Caco-2 (cell line): ENCODE measurements at regions of chr6 and their contacts with region 1.

Region 1: DNA sequence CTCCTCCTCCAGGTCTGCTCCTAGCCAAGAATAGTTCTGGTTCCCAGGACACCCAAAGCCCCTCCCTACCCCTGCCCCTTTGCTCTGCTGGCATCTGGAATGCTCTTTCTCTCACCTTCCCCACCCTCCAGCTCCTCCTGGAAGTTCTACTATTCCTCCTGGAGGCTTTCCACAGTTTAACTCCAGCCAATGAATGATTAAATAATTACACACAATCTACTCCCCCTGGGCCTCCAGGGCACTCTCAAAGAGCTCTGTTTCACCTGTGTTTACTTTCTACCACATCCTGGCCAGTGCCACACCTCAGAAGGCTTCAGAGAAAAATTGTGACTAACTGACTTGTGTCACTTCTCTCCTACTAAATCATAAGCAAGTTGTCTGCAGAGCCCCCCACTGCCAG is 36.2 kb downstream of the GCM1 start:
- DNase-seq: peak; percentile 28 to 61
- H3K4me3 ChIP-seq: no peak overlapping the region
- H3K4me3 Mint-ChIP-seq: no peak overlapping the region
- H3K27ac Mint-ChIP-seq: peak overlapping the region; percentile 79
- H3K4me1 ChIP-seq: peaks cover 38% of the 10 kb centered on the region
- H3K4me1 Mint-ChIP-seq: peaks cover 32% of the 10 kb centered on the region
- H3K27me3 ChIP-seq: no peaks in the 10 kb centered on the region
- H3K27me3 Mint-ChIP-seq: no peaks in the 10 kb centered on the region
- CTCF ChIP-seq: no peak

Region 2: DNA sequence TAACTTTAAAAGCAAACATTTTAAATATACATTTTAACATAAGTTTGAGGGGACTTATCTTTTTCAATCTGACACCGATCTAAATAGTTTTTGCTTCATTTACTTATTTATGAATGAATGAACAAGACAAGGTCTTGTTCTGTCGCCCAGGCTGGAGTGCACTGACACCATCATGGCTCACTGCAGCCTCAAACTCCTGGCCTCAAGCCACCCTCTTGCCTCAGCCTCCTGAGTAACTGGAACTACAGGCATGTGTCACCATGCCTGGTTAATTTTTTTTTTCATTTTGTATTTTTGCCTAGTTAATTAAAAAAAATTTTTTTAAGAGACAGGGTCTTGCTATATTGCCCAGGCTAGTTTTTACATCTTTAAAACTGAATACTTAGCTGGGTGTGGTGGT is 21.8 kb before region 1 on chr6:
- CTCF ChIA-PET with region 1: no interaction called
- POLR2A ChIA-PET with region 1: interaction called, 15 read pairs
- intact Hi-C with region 1: no loop called
- DNase-seq: no peak
- H3K4me3 ChIP-seq: no peak overlapping the region
- H3K4me3 Mint-ChIP-seq: no peak overlapping the region
- H3K27ac Mint-ChIP-seq: no peak overlapping the region
- H3K4me1 ChIP-seq: no peaks in the 10 kb centered on the region
- H3K4me1 Mint-ChIP-seq: no peaks in the 10 kb centered on the region
- H3K27me3 ChIP-seq: no peaks in the 10 kb centered on the region
- H3K27me3 Mint-ChIP-seq: no peaks in the 10 kb centered on the region
- CTCF ChIP-seq: no peak

Region 3: DNA sequence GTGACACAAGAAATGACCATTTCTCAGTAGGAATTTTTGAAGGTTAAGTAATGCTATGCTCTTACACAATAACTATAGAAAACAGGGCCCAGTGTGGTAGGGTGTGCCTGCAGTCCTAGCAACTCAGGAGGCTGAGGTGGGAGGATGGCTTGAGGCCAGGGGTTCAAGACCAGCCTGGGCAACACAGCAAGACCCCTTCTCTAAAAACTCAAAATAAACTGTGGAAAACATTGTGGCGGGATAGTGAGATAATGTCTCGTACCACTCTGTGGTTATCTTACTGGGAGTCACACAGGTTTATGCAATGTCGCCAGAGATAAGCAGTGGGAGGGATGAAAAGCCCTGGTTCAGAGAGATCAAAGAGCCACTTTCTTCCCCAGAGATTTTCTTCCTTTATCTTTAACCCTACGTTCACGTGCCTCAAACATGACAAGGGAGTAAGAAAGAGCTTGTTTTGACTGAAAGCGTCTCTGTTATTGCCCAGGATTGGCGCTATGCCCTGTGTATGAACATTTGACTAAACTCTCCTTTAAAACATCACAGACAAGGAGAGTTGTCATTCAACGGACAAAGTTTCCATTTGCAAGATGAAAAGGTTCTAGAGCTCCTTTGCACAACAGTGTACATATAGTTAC is 22.3 kb after region 1 on chr6:
- CTCF ChIA-PET with region 1: interaction called, 3 read pairs
- POLR2A ChIA-PET with region 1: interaction called, 6 read pairs
- intact Hi-C with region 1: loop called (anchors 2 kb)
- DNase-seq: peak; percentile 73 to 75
- H3K4me3 ChIP-seq: no peak overlapping the region
- H3K4me3 Mint-ChIP-seq: peak overlapping the region; percentile 47
- H3K27ac Mint-ChIP-seq: peak overlapping the region; percentile 55
- H3K4me1 ChIP-seq: peaks cover 28% of the 10 kb centered on the region
- H3K4me1 Mint-ChIP-seq: peaks cover 24% of the 10 kb centered on the region
- H3K27me3 ChIP-seq: no peaks in the 10 kb centered on the region
- H3K27me3 Mint-ChIP-seq: no peaks in the 10 kb centered on the region
- CTCF ChIP-seq: no peak

Region 4: DNA sequence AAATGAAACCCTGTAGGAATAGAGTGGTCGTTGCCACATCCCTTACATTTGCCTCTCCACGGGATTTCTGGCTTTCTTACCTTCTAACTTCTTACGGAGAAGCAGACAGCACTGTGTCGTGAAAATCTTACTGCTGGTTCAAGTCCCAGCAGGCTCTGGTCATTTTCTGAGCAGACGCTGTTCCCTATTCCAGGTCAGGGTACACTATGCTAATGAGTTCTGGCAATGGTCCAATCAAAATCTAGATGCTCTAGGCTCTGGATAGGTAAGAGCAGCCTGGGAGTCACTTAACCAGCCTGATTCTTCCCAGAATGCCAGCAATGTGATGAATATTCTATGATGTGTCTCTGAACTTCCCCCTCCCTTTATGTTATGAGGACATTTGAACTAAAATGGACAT is 36.3 kb after region 1 on chr6 and contains the start of gene GCM1:
- CTCF ChIA-PET with region 1: no interaction called
- POLR2A ChIA-PET with region 1: no interaction called
- intact Hi-C with region 1: loop called (anchors 5 kb)
- DNase-seq: peak; percentile 28 to 51
- H3K4me3 ChIP-seq: no peak within 1 kb of the TSS
- H3K4me3 Mint-ChIP-seq: no peak within 1 kb of the TSS
- H3K27ac Mint-ChIP-seq: no peak within 1 kb of the TSS
- H3K4me1 ChIP-seq: no peaks in the 10 kb centered on the region
- H3K4me1 Mint-ChIP-seq: peaks cover 9% of the 10 kb centered on the region
- H3K27me3 ChIP-seq: no peaks in the 10 kb centered on the region
- H3K27me3 Mint-ChIP-seq: no peaks in the 10 kb centered on the region
- CTCF ChIP-seq: no peak
- total RNA-seq, gene GCM1: 0.79 and 1.1 TPM in 2 replicates

Region 5: GRCh38 chr6:53199156-53199555 is 86.8 kb after region 1 on chr6:
- CTCF ChIA-PET with region 1: no interaction called
- POLR2A ChIA-PET with region 1: no interaction called
- intact Hi-C with region 1: no loop called
- DNase-seq: no peak
- H3K4me3 ChIP-seq: no peak overlapping the region
- H3K4me3 Mint-ChIP-seq: no peak overlapping the region
- H3K27ac Mint-ChIP-seq: no peak overlapping the region
- H3K4me1 ChIP-seq: no peaks in the 10 kb centered on the region
- H3K4me1 Mint-ChIP-seq: peaks cover 7% of the 10 kb centered on the region
- H3K27me3 ChIP-seq: no peaks in the 10 kb centered on the region
- H3K27me3 Mint-ChIP-seq: peaks cover 3% of the 10 kb centered on the region
- CTCF ChIP-seq: no peak